ENCODE measurements at regions of chr20 and their contacts with region 1.

Region 1: GRCh38 chr20:3045816-3046676 is at the start of gene MRPS26:
- DNase-seq: peak; percentile 85 to 91 (median 89)
- H3K4me3 ChIP-seq: peak within 1 kb of the TSS; percentile 79
- H3K27ac ChIP-seq: peak within 1 kb of the TSS; percentile 84 to 95
- H3K4me1 ChIP-seq: peaks cover 19% of the 10 kb centered on the region
- H3K27me3 ChIP-seq: no peaks in the 10 kb centered on the region
- CTCF ChIP-seq: no peak
- EP300 ChIP-seq: no peak
- POLR2A ChIP-seq: peak; percentile 68
- total RNA-seq, gene MRPS26: 40.8 to 65.8 (median 51.9) TPM

Region 2: GRCh38 chr20:3209946-3210317 is 163.9 kb after region 1 on chr20:
- intact Hi-C with region 1: loop called in 1 of 4 experiments (anchors 5 kb)
- DNase-seq: no peak
- H3K4me3 ChIP-seq: peak overlapping the region; percentile 69
- H3K27ac ChIP-seq: peak overlapping the region in 1 of 2 donors; percentile 68
- H3K4me1 ChIP-seq: peaks cover 7% of the 10 kb centered on the region
- H3K27me3 ChIP-seq: no peaks in the 10 kb centered on the region
- CTCF ChIP-seq: no peak
- EP300 ChIP-seq: no peak
- POLR2A ChIP-seq: no peak